HepG2 (cell line): ENCODE measurements at regions of chr2 and their contacts with region 1.

Region 1: DNA sequence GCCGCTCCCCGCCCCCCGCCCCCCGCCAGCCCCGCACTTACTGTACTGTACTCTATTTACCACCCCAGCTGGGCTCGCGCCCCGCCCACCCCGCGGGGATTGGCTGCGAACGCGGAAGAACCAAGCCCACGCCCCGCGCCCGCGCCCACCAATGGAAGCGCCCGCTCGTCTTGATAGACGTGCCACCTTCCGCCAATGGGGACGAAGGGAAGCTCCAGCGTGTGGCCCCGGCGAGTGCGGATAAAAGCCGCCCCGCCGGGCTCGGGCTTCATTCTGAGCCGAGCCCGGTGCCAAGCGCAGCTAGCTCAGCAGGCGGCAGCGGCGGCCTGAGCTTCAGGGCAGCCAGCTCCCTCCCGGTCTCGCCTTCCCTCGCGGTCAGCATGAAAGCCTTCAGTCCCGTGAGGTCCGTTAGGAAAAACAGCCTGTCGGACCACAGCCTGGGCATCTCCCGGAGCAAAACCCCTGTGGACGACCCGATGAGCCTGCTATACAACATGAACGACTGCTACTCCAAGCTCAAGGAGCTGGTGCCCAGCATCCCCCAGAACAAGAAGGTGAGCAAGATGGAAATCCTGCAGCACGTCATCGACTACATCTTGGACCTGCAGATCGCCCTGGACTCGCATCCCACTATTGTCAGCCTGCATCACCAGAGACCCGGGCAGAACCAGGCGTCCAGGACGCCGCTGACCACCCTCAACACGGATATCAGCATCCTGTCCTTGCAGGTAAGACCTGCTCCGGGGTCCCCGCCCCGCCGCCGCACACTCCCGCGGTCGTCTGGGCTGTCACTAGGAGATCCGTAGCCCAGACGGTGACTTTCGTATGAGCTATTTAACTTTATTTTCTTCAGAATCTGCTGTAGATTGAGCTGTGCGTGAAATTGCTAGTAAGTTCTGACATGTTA is at the start of gene ID2:
- DNase-seq: peak; percentile 99
- ATAC-seq: peak; percentile 44
- H3K4me3 ChIP-seq: peak within 1 kb of the TSS; percentile 73 to 100 (median 100)
- H3K27ac ChIP-seq: peak within 1 kb of the TSS; percentile 100
- H3K4me1 ChIP-seq: peaks cover 28% of the 10 kb centered on the region
- H3K27me3 ChIP-seq: peaks cover 0 to 8% of the 10 kb centered on the region in 2 experiments; a peak in 1 of 5 replicates
- CTCF ChIP-seq: peak; percentile 29; the same call in 1 of the 2 replicates
- EP300 ChIP-seq: peak in 1 of 2 experiments; percentile 51; a peak in 1 of 4 replicates
- POLR2A ChIP-seq: peak in 1 of 2 experiments; percentile 100; a peak in 2 of 4 replicates
- RAD21 ChIP-seq: peak; percentile 94
- total RNA-seq, gene ID2: 214 and 258 TPM in 2 replicates

Region 2: DNA sequence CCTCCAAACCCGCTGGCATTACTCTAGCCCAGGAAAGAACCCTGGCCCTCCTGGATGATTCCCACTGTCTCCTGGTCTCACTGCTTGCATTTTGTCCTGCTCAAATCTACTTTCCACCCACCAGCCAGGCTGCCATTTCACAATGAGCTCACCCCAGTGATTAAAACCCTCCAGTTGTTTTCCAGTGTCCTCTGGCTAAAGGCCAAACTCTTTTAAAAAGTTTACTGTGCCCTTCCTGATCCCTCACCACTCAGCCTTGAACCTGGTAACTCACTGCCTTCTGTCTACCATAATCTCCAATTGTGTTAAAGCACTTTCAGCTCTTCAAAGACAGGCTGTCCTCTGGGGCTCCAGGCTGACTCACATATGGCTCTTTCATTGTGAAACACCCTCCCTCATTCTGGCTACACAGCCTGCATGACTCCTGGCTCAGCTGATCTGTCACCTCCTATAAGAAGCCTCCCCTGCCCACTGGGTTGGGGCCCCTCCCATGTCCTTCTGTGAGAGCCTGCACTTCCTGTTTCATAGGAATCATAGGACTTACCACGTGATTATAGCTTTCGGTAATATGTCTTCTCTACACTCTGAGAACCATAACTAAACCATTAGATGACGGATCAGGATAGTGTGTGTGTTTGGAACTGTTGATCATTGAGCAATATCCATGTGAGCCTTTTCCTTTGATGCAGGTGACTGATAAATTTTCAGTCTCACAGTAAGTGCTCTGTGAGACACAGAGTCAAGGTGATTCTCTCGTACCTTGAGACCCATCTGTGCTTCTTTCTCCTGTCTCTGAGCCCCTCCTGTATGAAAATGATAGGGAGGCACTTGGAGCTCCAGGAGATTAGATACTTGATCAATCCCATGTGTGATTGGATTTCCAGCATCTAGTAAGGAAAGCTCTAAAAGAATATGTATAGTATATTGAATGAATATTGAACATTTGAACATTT is 591.0 kb before region 1 on chr2:
- CTCF ChIA-PET with region 1: no interaction called
- POLR2A ChIA-PET with region 1: interaction called, 27 read pairs
- in situ Hi-C with region 1: no loop called
- intact Hi-C with region 1: no loop called
- DNase-seq: peak; percentile 99
- ATAC-seq: peak; percentile 100
- H3K4me3 ChIP-seq: no peak overlapping the region
- H3K27ac ChIP-seq: peak overlapping the region; percentile 87
- H3K4me1 ChIP-seq: peaks cover 54% of the 10 kb centered on the region
- H3K27me3 ChIP-seq: no peaks in the 10 kb centered on the region
- CTCF ChIP-seq: no peak
- EP300 ChIP-seq: peak; percentile 80 to 92
- POLR2A ChIP-seq: peak; percentile 56 to 61; a peak in 3 of 4 replicates
- RAD21 ChIP-seq: peak; percentile 28

Region 3: DNA sequence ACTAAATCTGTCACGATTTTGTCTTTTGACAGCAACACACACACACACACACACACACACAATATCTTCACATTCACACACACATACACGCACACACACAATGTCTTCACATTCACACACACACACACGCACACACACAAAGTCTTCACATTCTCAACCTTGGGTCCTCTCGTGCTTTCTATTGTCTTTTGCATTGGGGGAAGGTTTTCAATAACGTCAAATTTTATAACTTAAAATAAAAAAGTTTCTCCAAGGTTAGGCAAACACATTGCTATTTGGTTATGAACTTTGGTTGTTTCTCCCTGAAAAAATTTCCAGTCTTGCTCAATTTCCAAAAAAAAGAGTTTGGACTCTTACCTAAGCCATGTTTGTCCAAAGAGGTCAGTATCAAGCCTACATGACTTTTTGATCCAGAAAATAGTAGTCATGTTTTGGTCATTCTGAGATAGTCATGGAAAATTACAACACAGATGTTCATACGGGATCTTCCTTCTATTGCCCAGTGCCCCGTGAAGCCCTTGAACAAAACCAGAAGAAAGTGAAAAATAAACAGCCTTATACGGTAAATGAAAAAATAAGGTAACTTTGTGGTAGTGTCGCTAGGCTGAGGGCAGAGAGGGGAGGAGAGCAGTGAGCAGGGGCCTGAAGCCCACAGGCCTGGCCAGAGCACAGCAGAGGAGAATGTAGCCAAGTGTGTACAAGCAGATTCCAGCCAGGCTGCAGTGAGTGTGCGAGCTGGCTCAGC is 542.9 kb before region 1 on chr2:
- CTCF ChIA-PET with region 1: no interaction called
- POLR2A ChIA-PET with region 1: interaction called, 14 read pairs
- in situ Hi-C with region 1: no loop called
- intact Hi-C with region 1: no loop called
- DNase-seq: peak; percentile 99
- ATAC-seq: peak; percentile 98
- H3K4me3 ChIP-seq: peak overlapping the region; percentile 42 to 63 (median 46); a peak in 5 of 6 replicates
- H3K27ac ChIP-seq: peak overlapping the region; percentile 98
- H3K4me1 ChIP-seq: peaks cover 100% of the 10 kb centered on the region
- H3K27me3 ChIP-seq: no peaks in the 10 kb centered on the region
- CTCF ChIP-seq: no peak
- EP300 ChIP-seq: peak; percentile 94 to 99
- POLR2A ChIP-seq: peak; percentile 69 to 89
- RAD21 ChIP-seq: peak; percentile 49

Region 4: DNA sequence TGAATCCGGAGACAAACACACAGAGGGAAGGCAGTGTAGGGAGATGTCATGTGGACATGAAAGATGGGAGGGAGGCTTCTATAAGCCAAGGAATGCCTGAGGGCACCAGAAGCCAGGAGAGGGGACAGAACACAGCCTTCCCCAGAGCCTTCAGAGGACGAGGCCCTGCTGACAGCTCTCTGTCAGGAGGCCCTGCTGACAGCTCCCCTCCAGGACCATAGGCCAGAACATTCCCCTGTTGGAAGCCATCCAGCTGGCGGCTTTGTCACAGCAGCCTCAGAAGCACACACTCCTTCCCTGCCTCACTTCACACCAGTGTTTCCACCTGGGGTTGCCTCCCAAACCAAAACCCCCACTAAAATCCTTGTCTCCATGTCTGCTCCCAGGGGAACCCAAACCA is 171.5 kb before region 1 on chr2:
- CTCF ChIA-PET with region 1: no interaction called
- POLR2A ChIA-PET with region 1: no interaction called
- in situ Hi-C with region 1: no loop called
- intact Hi-C with region 1: no loop called
- DNase-seq: no peak
- ATAC-seq: no peak
- H3K4me3 ChIP-seq: no peak overlapping the region
- H3K27ac ChIP-seq: no peak overlapping the region
- H3K4me1 ChIP-seq: no peaks in the 10 kb centered on the region
- H3K27me3 ChIP-seq: peaks cover 6 to 45% of the 10 kb centered on the region in 2 experiments; a peak in 3 of 5 replicates
- CTCF ChIP-seq: no peak
- EP300 ChIP-seq: no peak
- POLR2A ChIP-seq: no peak
- RAD21 ChIP-seq: no peak

Region 5: DNA sequence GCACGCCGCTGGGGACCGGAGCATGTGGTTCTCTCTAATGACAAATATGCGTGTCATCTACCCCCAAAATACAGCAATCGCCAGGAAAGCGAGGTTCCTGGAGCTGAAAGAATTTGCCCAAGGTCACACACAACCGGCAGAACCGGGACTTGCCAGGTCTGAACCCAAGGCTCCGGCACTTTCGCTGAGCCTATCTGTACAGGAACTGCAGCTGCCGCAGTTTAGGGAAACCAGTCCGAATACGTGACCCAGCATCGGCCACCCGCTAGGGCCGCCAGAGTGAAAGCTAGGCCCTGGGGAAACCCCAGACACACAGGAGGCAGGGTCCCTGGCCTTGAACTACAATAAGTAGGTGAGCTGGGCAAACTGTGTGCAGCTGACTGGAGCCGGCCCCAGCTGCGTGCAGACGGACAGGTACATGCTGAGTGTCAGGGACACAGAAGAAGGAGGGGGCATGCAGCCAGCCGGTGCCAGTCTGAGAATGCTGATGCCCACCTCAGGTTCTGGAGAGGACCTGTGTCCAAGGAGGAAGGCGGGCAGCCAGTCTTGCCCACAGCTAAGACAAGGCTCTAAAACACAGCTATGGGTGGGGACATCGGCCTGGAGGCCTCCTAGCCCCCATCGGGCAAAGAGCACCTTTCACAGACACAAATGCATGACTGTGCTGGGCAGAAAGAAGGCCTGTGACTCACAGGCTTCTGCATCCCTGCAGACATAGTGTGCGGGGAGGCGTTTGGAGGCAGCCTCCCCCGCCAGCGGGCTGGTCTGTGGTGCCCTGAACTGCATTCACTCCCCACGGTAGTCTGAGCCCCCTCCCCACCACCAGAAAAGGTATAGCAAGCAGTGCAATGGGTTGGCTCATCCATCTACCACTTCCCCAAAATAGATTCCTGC is 107.6 kb before region 1 on chr2:
- CTCF ChIA-PET with region 1: no interaction called
- POLR2A ChIA-PET with region 1: interaction called, 313 read pairs
- in situ Hi-C with region 1: no loop called
- intact Hi-C with region 1: loop called (anchors 1 kb)
- DNase-seq: peak; percentile 90
- ATAC-seq: peak; percentile 81
- H3K4me3 ChIP-seq: peak overlapping the region; percentile 51 to 71 (median 55)
- H3K27ac ChIP-seq: peak overlapping the region; percentile 82
- H3K4me1 ChIP-seq: peaks cover 75% of the 10 kb centered on the region
- H3K27me3 ChIP-seq: no peaks in the 10 kb centered on the region; a peak in 2 of 5 replicates
- CTCF ChIP-seq: peak; percentile 25
- EP300 ChIP-seq: peak; percentile 69 to 85; a peak in 3 of 4 replicates
- POLR2A ChIP-seq: peak in 1 of 2 experiments; percentile 54; a peak in 3 of 4 replicates
- RAD21 ChIP-seq: peak; percentile 40

Region 6: GRCh38 chr2:8612734-8613179 is 69.3 kb before region 1 on chr2:
- CTCF ChIA-PET with region 1: interaction called, 4 read pairs
- POLR2A ChIA-PET with region 1: interaction called, 206 read pairs
- in situ Hi-C with region 1: no loop called
- intact Hi-C with region 1: loop called (anchors 1 kb)
- DNase-seq: peak; percentile 91
- ATAC-seq: peak; percentile 67
- H3K4me3 ChIP-seq: peak overlapping the region in 1 of 3 experiments; percentile 38; a peak in 2 of 6 replicates
- H3K27ac ChIP-seq: peak overlapping the region; percentile 72
- H3K4me1 ChIP-seq: peaks cover 66% of the 10 kb centered on the region
- H3K27me3 ChIP-seq: no peaks in the 10 kb centered on the region
- CTCF ChIP-seq: no peak; the same call in 1 of the 2 replicates
- EP300 ChIP-seq: peak in 1 of 2 experiments; percentile 88; a peak in 1 of 4 replicates
- POLR2A ChIP-seq: no peak
- RAD21 ChIP-seq: peak; percentile 14; the same call in 1 of the 2 replicates

Region 7: DNA sequence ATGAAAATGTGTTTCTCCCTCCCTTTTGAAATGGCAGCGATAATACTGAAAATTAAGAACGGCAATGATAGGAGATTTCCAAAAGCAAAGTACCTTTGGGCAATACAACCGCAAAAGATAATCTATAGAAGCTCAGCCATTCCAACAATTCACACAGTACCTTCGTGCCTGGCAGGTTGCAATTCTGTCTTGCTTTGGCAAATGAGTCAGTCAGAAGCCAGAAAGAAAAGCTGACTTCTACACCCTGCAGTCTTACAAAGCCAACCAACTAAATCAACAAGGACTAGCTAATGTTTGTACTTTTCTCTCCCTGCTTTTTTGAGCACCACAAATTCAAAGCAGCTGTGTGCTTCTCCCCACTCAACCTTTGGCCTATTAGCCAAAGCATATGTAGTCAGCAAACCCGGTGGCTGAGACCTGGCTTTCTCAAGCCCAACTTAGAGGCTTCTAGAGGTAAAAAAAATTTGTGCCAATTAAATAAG is 25.8 kb before region 1 on chr2:
- CTCF ChIA-PET with region 1: interaction called, 6 read pairs
- POLR2A ChIA-PET with region 1: interaction called, 61 read pairs
- in situ Hi-C with region 1: no loop called
- intact Hi-C with region 1: loop called (anchors 1 kb)
- DNase-seq: peak; percentile 94
- ATAC-seq: peak; percentile 75
- H3K4me3 ChIP-seq: peak overlapping the region in 2 of 3 experiments; percentile 3 to 6; a peak in 1 of 6 replicates
- H3K27ac ChIP-seq: peak overlapping the region; percentile 62
- H3K4me1 ChIP-seq: peaks cover 81% of the 10 kb centered on the region
- H3K27me3 ChIP-seq: no peaks in the 10 kb centered on the region
- CTCF ChIP-seq: peak; percentile 28
- EP300 ChIP-seq: peak in 1 of 2 experiments; percentile 84; a peak in 2 of 4 replicates
- POLR2A ChIP-seq: 0 out of 4 replicates have a peak, but pooled peaks of 1 of the 2 experiments have one; percentile 14
- RAD21 ChIP-seq: peak; percentile 31; the same call in 1 of the 2 replicates

Region 8: GRCh38 chr2:8720741-8721140 is 38.7 kb after region 1 on chr2:
- CTCF ChIA-PET with region 1: no interaction called
- POLR2A ChIA-PET with region 1: no interaction called
- in situ Hi-C with region 1: no loop called
- intact Hi-C with region 1: no loop called
- DNase-seq: no peak
- ATAC-seq: no peak
- H3K4me3 ChIP-seq: no peak overlapping the region
- H3K27ac ChIP-seq: no peak overlapping the region
- H3K4me1 ChIP-seq: peaks cover 10% of the 10 kb centered on the region; the same call in 1 of the 2 replicates
- H3K27me3 ChIP-seq: peaks cover 0 to 3% of the 10 kb centered on the region in 2 experiments; a peak in 1 of 5 replicates
- CTCF ChIP-seq: no peak
- EP300 ChIP-seq: no peak
- POLR2A ChIP-seq: no peak
- RAD21 ChIP-seq: no peak

Region 9: DNA sequence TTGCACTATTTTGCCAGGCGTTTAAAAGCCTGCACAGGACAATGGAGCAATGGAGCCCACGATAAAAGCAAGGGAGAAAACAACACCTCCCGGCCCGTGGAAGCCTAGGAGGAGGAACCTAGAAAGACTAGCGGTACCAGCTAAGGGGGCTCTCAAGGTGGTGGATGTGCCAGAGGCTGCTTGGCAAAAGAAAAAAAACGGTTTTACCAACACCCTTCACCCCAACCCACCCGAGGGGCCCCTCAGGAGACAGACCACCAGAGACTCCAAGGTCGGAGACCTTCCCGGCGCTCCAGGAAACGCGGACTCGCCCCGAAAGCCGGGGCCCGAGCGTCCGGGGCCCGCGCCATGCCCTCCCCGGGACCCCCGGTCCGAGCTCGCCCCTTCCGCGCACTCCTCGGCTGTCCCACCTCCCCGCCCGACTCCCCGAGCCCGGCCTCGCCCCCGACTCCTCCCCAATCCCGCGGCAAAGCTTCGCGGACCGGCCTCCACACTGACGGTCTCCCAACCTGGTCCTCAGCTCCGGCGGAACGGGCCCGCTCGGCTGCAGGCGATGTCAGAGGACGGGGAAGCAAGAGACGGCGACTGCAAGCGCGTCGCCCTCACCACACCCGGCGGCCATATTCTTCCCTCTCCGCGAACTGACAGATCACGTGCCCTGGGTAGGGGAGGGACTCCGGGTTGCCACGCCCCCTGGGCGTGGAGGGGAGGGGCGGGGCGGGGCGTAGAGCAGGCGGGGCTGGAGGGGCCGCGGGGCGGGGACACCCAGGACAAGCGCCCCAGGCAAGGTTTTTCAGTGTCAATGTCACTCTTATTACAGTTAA is 155.1 kb after region 1 on chr2 and contains the start of gene KIDINS220:
- CTCF ChIA-PET with region 1: no interaction called
- POLR2A ChIA-PET with region 1: no interaction called
- in situ Hi-C with region 1: no loop called
- intact Hi-C with region 1: no loop called
- DNase-seq: peak; percentile 75
- ATAC-seq: peak; percentile 83
- H3K4me3 ChIP-seq: peak within 1 kb of the TSS; percentile 92 to 98 (median 98)
- H3K27ac ChIP-seq: peak within 1 kb of the TSS; percentile 41
- H3K4me1 ChIP-seq: peaks cover 70% of the 10 kb centered on the region
- H3K27me3 ChIP-seq: no peaks in the 10 kb centered on the region; a peak in 1 of 5 replicates
- CTCF ChIP-seq: 0 out of 2 replicates have a peak, but pooled peaks have one; percentile 19
- EP300 ChIP-seq: peak in 1 of 2 experiments; percentile 20; a peak in 1 of 4 replicates
- POLR2A ChIP-seq: peak; percentile 85 to 95
- RAD21 ChIP-seq: peak; percentile 45; the same call in 1 of the 2 replicates
- total RNA-seq, gene KIDINS220: 22.4 and 32.3 TPM in 2 replicates